ENCODE measurements at regions of chr22 and their contacts with region 1.

Region 1: DNA sequence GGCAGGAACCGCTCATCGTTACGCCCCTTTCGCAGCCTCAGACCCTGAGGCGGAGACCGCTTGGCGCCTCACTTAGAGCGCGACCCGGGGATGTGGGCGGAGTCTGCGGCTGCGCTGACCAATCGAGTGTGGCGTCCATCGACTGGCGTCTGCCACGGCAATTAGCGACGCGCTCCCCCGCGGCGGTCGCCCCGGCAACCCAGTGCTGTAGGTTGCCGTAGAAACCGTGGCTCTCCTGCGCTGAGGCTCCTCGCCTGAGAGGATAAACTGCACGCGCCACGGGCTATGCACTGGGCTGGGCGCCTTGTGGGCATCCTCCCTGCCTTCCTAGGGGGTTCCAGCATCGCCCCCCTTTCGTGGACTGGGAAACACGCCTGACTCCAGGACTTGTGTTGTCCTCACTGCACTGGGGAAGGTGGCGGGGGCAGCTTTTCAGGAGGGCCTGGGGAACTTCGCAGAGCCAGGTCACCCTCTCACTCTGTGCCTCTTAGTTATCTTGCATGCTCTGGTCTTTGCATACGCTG is 701 bp upstream of the P2RX6 start:
- DNase-seq: peak; percentile 74
- H3K4me3 ChIP-seq: peak overlapping the region; percentile 74
- H3K27ac ChIP-seq: peak overlapping the region; percentile 73
- H3K27me3 ChIP-seq: peaks cover 2% of the 10 kb centered on the region
- CTCF ChIP-seq: no peak

Region 2: DNA sequence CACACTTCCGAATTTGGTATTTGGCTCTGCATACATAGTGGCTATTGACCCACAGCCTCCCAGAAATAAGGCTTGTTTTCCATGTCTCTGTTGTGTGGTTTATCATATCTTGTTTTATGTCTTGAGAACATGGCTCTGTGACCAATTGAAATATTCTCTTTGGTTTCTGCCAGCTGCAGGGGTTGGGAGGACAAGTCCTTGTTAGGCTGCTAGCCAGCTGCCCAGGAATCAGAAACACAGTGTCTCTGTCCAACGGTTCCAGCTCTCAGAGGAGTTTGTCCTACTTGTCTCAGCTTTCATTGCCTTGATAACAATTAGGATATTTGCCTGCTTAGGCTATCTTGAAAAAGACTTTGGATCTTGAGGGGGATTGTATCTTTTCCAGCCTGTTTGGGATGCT is 24.1 kb after region 1 on chr22:
- CTCF ChIA-PET with region 1: interaction called, 3 read pairs
- POLR2A ChIA-PET with region 1: interaction called, 15 read pairs
- DNase-seq: no peak
- H3K4me3 ChIP-seq: no peak overlapping the region
- H3K27ac ChIP-seq: peak overlapping the region; percentile 95
- H3K27me3 ChIP-seq: no peaks in the 10 kb centered on the region
- CTCF ChIP-seq: no peak